Activated CD4-positive, alpha-beta T cell treated with anti-CD3 and anti-CD28 coated beads for 36 hours (primary cell): ENCODE measurements at regions of chr12 and their contacts with region 1.

Region 1: DNA sequence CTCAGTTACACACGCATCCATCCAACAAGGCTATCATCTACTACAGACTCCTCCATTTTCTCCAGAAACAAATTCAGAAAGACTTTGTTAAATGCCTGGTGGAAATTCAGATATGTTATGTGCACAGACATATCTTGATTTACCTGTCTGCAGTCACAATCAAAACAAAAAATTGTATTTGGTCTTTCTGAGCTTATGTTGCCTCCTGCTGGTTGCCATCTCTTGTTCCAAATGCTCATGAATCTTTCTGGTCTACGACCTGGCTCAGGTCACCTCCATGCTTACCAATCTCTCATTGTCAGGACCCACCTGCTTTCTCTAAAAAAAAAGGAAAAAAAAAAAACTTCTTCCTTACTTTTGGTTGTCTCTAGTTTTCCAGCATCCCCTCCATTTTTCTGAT is 169.2 kb upstream of the PLXNC1 start:
- DNase-seq: peak; percentile 43
- ATAC-seq: no peak
- H3K4me3 Mint-ChIP-seq: no peak overlapping the region
- H3K27ac Mint-ChIP-seq: no peak overlapping the region
- H3K4me1 Mint-ChIP-seq: peaks cover 22% of the 10 kb centered on the region
- H3K27me3 Mint-ChIP-seq: peaks cover 12% of the 10 kb centered on the region

Region 2: GRCh38 chr12:93766796-93767523 is 212.2 kb before region 1 on chr12:
- CTCF ChIA-PET with region 1: interaction called, 5 read pairs
- POLR2A ChIA-PET with region 1: no interaction called
- intact Hi-C with region 1: loop called (anchors 1 kb)
- DNase-seq: peak; percentile 54
- ATAC-seq: peak; percentile 75
- H3K4me3 Mint-ChIP-seq: no peak overlapping the region
- H3K27ac Mint-ChIP-seq: no peak overlapping the region
- H3K4me1 Mint-ChIP-seq: peaks cover 22% of the 10 kb centered on the region
- H3K27me3 Mint-ChIP-seq: no peaks in the 10 kb centered on the region

Region 3: GRCh38 chr12:93943766-93944165 is 35.4 kb before region 1 on chr12:
- CTCF ChIA-PET with region 1: no interaction called
- POLR2A ChIA-PET with region 1: no interaction called
- intact Hi-C with region 1: no loop called
- DNase-seq: no peak
- ATAC-seq: peak; percentile 23
- H3K4me3 Mint-ChIP-seq: no peak overlapping the region
- H3K27ac Mint-ChIP-seq: no peak overlapping the region
- H3K4me1 Mint-ChIP-seq: no peaks in the 10 kb centered on the region
- H3K27me3 Mint-ChIP-seq: no peaks in the 10 kb centered on the region

Region 4: DNA sequence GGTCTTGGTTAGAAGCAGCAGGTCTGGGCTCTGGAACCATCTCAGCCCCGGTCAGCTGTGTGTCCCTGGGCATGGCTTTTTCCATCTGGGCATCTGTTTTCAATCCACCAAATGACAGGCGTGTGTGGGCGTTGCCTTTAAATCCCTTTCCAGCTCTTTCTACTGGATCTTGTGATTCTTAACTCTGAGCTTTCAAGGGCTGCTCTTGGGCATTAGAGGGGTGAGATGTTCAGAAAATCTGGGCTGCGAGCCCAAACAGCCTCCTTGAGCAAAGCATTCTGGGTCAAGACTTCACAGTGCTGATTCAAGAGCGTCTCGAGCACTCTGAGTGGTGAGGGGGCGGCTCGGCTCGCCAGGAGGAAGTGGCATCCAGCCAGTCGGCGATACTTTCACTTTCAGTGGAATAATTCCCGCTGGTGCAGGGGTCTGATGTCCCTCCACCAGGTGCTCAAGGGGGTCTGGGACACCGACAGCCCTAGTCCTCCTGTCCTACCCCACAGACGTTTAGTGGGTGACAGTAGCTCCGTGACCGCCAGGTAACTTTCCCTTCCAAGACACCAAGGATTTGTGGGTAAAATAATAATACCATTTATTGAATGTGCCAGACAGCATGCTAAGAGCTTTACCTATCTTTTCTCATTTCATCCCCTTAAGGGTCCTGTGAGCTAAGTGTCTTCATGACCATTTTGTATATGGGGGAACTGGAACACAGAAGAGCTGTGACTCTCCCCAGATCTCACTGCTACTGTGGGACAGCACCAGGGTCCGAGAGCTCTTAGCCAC is 283.2 kb after region 1 on chr12:
- CTCF ChIA-PET with region 1: no interaction called
- POLR2A ChIA-PET with region 1: no interaction called
- intact Hi-C with region 1: no loop called
- DNase-seq: peak; percentile 87
- ATAC-seq: peak; percentile 83
- H3K4me3 Mint-ChIP-seq: peak overlapping the region; percentile 81
- H3K27ac Mint-ChIP-seq: peak overlapping the region; percentile 99
- H3K4me1 Mint-ChIP-seq: peaks cover 44% of the 10 kb centered on the region
- H3K27me3 Mint-ChIP-seq: no peaks in the 10 kb centered on the region